HepG2 (cell line): ENCODE measurements at regions of chr12 and their contacts with region 1.

Region 1: DNA sequence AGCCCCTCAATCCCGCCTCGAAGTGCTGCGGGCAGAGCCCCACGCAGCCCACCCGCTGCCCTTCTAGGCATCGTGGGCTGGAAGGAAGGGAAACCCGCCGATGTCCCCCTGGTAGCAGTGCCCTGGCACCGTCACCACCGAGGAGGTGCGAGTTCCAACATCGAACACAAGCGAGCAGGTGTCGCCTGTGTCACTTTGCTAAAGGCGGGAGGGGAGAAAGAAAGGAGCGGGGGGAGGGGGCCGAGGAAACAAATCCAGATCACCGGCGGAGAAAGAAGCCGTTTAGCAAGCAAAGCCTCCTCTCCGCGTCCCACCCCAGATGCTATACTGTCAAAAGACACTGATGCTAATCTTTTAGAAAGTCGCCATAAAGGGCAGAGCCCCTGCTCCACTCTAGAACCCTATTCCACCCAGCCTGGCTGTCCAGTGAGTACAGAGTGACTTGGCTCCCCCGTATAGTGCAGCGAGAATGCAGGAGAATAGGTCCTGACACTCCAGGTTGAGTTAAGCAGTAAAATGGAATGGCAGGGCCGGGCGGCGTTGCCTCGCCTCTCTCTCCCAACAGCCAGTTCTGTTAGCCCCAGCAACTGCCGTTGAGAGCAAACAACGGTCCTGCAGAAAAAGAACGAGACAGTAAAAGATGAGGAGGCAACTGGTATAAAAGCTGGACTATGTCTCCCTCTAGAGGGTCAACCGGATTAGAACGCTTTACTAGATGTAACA is 67.9 kb upstream of the USP15 start:
- DNase-seq: peak; percentile 71
- ATAC-seq: peak; percentile 98
- H3K4me3 ChIP-seq: peak overlapping the region in 1 of 3 experiments; percentile 25; a peak in 1 of 6 replicates
- H3K27ac ChIP-seq: no peak overlapping the region
- H3K4me1 ChIP-seq: peaks cover 22% of the 10 kb centered on the region
- H3K27me3 ChIP-seq: peaks cover 1 to 22% of the 10 kb centered on the region in 2 experiments; a peak in 3 of 5 replicates
- CTCF ChIP-seq: peak; percentile 83
- EP300 ChIP-seq: no peak
- POLR2A ChIP-seq: no peak
- RAD21 ChIP-seq: peak; percentile 70

Region 2: DNA sequence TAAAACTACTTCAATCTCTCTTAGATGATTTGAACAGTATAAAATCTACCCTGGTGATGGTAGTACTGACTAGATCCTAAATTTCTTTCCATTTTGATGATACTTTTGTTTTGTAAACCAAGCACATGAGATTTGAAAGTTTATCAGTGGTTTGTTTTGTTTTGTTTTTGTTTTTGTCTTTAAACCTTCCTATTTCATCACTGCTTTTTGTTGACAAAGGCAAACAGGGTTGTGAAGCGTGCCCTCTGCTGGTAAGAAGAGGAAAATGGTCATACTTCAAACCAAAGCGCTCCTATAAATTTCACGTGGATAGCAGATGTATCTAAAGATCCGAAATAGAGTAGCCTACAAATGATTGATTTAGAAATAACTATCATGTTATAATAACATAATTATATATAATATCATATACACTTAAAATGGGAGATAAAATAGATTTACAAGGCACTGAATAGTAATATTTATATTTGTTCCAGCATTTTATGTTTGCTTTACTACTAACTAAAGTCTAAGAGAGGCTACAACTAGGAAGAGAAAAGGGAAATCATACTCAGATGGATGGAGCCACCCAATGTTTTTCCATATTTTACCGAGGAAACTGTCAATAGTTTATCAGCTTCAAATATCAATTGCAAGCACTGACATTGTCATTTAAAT is 186.1 kb before region 1 on chr12:
- CTCF ChIA-PET with region 1: no interaction called
- POLR2A ChIA-PET with region 1: no interaction called
- in situ Hi-C with region 1: no loop called
- intact Hi-C with region 1: loop called (anchors 5 kb)
- DNase-seq: peak; percentile 34
- ATAC-seq: no peak
- H3K4me3 ChIP-seq: no peak overlapping the region
- H3K27ac ChIP-seq: no peak overlapping the region
- H3K4me1 ChIP-seq: no peaks in the 10 kb centered on the region
- H3K27me3 ChIP-seq: no peaks in the 10 kb centered on the region
- CTCF ChIP-seq: peak; percentile 63
- EP300 ChIP-seq: no peak
- POLR2A ChIP-seq: no peak
- RAD21 ChIP-seq: no peak